ENCODE measurements at regions of chr15 and their contacts with region 1.

Region 1: DNA sequence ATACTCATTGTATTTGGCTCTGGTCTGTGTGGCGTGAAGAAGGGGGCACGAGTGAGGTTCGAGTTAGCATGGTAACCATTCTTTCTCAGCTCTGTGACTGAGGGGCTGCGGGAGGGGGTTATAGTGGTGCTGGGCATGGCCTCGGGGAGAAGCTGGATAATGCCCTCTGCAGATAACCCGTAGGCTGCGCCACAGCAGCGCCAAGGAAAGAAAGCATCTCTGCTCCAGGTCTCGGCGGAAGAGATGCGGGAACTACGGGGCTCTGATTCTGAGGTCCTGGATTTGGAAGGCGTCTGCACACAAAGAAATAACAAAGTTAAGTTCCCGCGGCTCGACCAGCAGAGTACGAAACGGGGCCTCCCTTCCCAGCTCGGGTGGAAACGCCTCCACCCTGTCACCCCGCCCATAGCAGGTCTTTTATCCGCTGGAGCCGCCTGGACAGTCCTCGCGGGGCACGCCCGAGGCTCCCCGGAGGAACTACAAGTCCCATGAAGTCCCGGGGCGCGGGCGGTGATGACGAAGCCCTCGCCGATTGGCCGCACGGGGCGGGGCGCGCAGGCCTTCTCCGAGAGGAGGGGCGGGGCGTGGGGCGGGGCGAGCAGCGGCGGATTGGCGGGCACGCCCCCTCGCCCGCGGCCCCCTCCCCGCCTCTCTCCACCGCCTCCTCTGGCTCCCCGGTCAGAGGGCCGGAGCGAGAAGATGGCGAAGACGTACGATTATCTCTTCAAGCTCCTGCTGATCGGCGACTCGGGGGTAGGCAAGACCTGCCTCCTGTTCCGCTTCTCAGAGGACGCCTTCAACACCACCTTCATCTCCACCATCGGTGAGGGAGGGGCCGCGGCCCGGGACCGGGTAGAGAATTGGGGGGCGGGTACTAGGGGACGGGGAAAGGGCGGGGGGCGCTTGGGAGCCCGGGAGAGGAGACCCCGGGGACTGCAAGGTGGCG is at the start of gene RAB8B:
- DNase-seq: peak; percentile 90 to 100 (median 93)
- ATAC-seq: peak; percentile 67 to 75
- H3K4me3 Mint-ChIP-seq: peak within 1 kb of the TSS; percentile 90 to 99 (median 95)
- H3K27ac Mint-ChIP-seq: peak within 1 kb of the TSS; percentile 85 to 98 (median 97)
- H3K4me1 Mint-ChIP-seq: peaks cover 31 to 58% (median 48%) of the 10 kb centered on the region in 4 donors
- H3K27me3 Mint-ChIP-seq: no peaks in the 10 kb centered on the region
- polyA plus RNA-seq, gene RAB8B: 35.1 to 40.7 (median 35.3) TPM

Region 2: GRCh38 chr15:63093486-63094205 is 95.6 kb before region 1 on chr15:
- POLR2A ChIA-PET with region 1: no interaction called
- DNase-seq: peak; percentile 42 to 84 (median 58)
- ATAC-seq: peak; percentile 87 to 100
- H3K4me3 Mint-ChIP-seq: no peak overlapping the region
- H3K27ac Mint-ChIP-seq: peak overlapping the region in 2 of 10 donors; percentile 1
- H3K4me1 Mint-ChIP-seq: peaks cover 0 to 6% (median 2%) of the 10 kb centered on the region in 4 donors
- H3K27me3 Mint-ChIP-seq: peaks cover 0 to 1% (median 0%) of the 10 kb centered on the region in 5 donors

Region 3: GRCh38 chr15:63146669-63147068 is 42.5 kb before region 1 on chr15:
- POLR2A ChIA-PET with region 1: no interaction called
- DNase-seq: no peak
- ATAC-seq: peak in 1 of 2 donors; percentile 20
- H3K4me3 Mint-ChIP-seq: no peak overlapping the region
- H3K27ac Mint-ChIP-seq: peak overlapping the region in 3 of 10 donors; percentile 51 to 79 (median 78)
- H3K4me1 Mint-ChIP-seq: peaks cover 0 to 16% (median 3%) of the 10 kb centered on the region in 4 donors
- H3K27me3 Mint-ChIP-seq: no peaks in the 10 kb centered on the region

Region 4: GRCh38 chr15:63157118-63157843 is 31.9 kb before region 1 on chr15 and contains the start of gene RPS27L:
- POLR2A ChIA-PET with region 1: interaction called, 56 read pairs
- DNase-seq: peak; percentile 75 to 93 (median 84)
- ATAC-seq: peak; percentile 97
- H3K4me3 Mint-ChIP-seq: peak within 1 kb of the TSS; percentile 97 to 100 (median 99)
- H3K27ac Mint-ChIP-seq: peak within 1 kb of the TSS; percentile 94 to 99 (median 98)
- H3K4me1 Mint-ChIP-seq: peaks cover 3 to 30% (median 20%) of the 10 kb centered on the region in 4 donors
- H3K27me3 Mint-ChIP-seq: no peaks in the 10 kb centered on the region
- polyA plus RNA-seq, gene RPS27L: 143 to 221 (median 206) TPM

Region 5: GRCh38 chr15:63210151-63211091 is 21.2 kb after region 1 on chr15:
- POLR2A ChIA-PET with region 1: interaction called, 12 read pairs
- DNase-seq: no peak
- ATAC-seq: peak; percentile 60 to 76
- H3K4me3 Mint-ChIP-seq: peak overlapping the region; percentile 46 to 79 (median 72)
- H3K27ac Mint-ChIP-seq: peak overlapping the region; percentile 36 to 91 (median 84)
- H3K4me1 Mint-ChIP-seq: peaks cover 50 to 94% (median 85%) of the 10 kb centered on the region in 4 donors
- H3K27me3 Mint-ChIP-seq: no peaks in the 10 kb centered on the region

Region 6: GRCh38 chr15:63238796-63239195 is 49.6 kb after region 1 on chr15:
- POLR2A ChIA-PET with region 1: interaction called, 50 read pairs
- DNase-seq: no peak
- ATAC-seq: no peak
- H3K4me3 Mint-ChIP-seq: no peak overlapping the region
- H3K27ac Mint-ChIP-seq: peak overlapping the region in 4 of 10 donors; percentile 25 to 69 (median 40)
- H3K4me1 Mint-ChIP-seq: peaks cover 29 to 75% (median 69%) of the 10 kb centered on the region in 4 donors
- H3K27me3 Mint-ChIP-seq: no peaks in the 10 kb centered on the region

Region 7: GRCh38 chr15:63246691-63247464 is 57.7 kb after region 1 on chr15:
- POLR2A ChIA-PET with region 1: interaction called, 16 read pairs
- DNase-seq: no peak
- ATAC-seq: no peak
- H3K4me3 Mint-ChIP-seq: peak overlapping the region in 1 of 10 donors; percentile 29
- H3K27ac Mint-ChIP-seq: peak overlapping the region in 9 of 10 donors; percentile 6 to 75 (median 49)
- H3K4me1 Mint-ChIP-seq: peaks cover 22 to 56% (median 46%) of the 10 kb centered on the region in 4 donors
- H3K27me3 Mint-ChIP-seq: no peaks in the 10 kb centered on the region

Region 8: DNA sequence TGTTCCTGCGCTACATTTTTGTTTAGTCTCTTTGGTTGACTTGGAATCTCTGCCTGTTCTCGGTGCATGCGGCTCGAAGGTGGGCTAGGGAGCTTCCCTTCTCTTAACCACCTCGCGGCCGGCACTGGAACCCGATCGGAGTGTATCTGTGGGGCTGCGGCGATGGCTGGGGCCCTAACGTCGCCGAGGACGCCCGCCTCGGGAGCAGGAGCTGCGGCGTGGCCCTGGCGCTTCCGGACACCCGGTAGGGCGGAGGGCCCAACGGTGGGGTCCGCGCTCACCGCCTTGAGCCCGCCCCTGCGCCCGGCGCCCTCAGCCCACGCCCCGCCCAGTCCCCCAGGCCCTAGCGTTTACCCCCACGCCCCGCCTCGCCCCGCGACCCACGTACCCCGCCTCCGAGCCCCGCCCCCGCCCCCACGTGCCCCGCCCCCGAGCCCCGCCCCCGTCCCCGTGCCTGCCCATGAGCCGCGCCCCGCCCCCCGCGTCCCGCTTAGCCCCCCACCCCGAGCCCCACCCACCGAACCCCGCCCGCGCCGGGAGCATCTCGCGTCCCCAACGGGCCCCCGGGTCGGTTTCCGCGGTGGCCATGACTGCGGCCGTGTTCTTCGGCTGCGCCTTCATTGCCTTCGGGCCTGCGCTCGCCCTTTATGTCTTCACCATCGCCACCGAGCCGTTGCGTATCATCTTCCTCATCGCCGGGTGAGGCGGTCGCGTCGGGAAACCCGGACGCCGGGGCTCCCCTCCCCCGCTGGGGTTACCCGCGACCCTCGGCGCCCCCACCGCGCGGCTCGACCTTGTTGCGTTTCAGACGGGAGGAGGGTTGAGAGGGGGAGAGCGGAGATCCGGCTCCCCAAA is 88.1 kb after region 1 on chr15 and contains the start of gene APH1B:
- POLR2A ChIA-PET with region 1: interaction called, 36 read pairs
- DNase-seq: peak; percentile 64 to 90 (median 78)
- ATAC-seq: peak; percentile 84 to 87
- H3K4me3 Mint-ChIP-seq: peak within 1 kb of the TSS; percentile 82 to 94 (median 92)
- H3K27ac Mint-ChIP-seq: peak within 1 kb of the TSS; percentile 76 to 95 (median 90)
- H3K4me1 Mint-ChIP-seq: peaks cover 9 to 50% (median 37%) of the 10 kb centered on the region in 4 donors
- H3K27me3 Mint-ChIP-seq: no peaks in the 10 kb centered on the region
- polyA plus RNA-seq, gene APH1B: 8.3 to 14.3 (median 11.1) TPM

Region 9: DNA sequence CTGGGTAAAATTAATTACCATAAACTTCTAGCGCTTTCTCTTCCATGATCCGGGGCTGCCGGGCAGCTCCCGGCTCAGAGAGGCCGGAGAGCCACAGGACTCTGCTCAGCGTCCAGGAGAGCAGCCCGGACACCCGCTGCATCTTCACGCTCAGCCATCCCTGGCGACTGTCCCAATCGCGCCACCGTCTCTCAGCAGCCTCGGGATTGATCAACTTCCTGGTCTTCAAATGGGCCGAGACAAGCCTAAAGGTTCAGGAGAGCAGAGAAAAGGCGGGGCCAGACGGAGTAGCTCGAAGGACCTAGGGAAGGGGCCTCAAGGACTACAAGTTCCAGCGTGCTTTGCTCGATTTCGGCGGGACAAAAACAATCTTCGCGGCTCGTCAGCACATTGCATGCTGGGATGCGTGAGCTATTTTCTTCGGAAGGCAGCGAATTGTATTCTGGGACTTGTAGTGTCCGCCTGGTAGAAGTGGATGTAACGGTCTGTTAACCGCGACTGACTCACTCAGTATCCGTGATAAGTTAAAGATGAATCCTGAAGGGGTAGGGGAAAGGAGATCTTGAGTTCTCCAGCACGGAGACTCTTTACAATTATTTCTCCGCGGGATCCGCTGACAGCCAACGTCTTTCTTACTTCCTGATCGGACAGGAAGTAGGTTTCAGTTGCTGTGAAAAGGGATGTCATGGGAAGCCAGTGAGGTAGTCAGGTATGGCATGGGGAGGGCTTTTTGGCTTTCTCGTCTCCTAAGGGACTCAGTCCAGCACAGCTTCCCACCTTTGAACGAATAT is 904.6 kb after region 1 on chr15 and contains the start of gene CIAO2A:
- POLR2A ChIA-PET with region 1: interaction called, 12 read pairs
- DNase-seq: peak; percentile 69 to 95 (median 88)
- ATAC-seq: peak; percentile 69 to 72
- H3K4me3 Mint-ChIP-seq: peak within 1 kb of the TSS; percentile 93 to 100 (median 97)
- H3K27ac Mint-ChIP-seq: peak within 1 kb of the TSS; percentile 94 to 100 (median 100)
- H3K4me1 Mint-ChIP-seq: peaks cover 42 to 89% (median 80%) of the 10 kb centered on the region in 4 donors
- H3K27me3 Mint-ChIP-seq: no peaks in the 10 kb centered on the region
- polyA plus RNA-seq, gene CIAO2A: 54.8 to 84.8 (median 64.9) TPM